AG04449 (cell line): ENCODE measurements at regions of chr6 and their contacts with region 1.

Region 1: DNA sequence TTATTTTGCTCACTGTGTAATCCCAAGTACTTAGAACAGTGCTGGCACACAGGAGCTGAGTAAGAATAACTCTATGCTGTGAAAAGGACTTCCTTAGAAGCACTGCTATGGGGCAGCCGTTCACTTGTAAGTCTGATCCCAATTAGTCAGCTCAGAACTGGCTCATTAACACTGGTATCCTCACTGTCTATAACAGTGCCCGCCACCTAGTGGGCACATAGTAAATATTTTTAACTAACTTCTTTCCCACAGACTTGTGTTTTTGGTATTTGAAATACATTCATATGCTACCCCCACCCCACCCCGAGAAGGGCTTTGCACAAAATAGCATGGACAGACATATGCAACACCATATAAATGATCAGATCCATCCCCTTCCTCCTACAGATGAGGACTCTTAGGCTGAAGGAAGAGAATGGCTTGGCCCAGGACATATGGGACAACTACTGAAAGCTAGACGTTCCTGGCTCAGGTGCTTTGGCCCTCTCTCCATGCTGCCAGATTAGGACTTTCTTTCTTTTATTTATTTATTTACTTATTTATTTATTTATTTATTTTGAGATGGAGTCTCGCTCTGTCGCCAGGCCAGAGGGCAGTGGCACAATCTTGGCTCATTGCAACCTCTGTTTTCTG is 47.1 kb downstream of the DST start:
- DNase-seq: no peak
- H3K4me3 ChIP-seq: no peak overlapping the region
- CTCF ChIP-seq: peak; percentile 32

Region 2: GRCh38 chr6:56259234-56260077 is 336.1 kb before region 1 on chr6:
- CTCF ChIA-PET with region 1: no interaction called
- POLR2A ChIA-PET with region 1: no interaction called
- DNase-seq: peak; percentile 34
- H3K4me3 ChIP-seq: no peak overlapping the region
- CTCF ChIP-seq: no peak

Region 3: DNA sequence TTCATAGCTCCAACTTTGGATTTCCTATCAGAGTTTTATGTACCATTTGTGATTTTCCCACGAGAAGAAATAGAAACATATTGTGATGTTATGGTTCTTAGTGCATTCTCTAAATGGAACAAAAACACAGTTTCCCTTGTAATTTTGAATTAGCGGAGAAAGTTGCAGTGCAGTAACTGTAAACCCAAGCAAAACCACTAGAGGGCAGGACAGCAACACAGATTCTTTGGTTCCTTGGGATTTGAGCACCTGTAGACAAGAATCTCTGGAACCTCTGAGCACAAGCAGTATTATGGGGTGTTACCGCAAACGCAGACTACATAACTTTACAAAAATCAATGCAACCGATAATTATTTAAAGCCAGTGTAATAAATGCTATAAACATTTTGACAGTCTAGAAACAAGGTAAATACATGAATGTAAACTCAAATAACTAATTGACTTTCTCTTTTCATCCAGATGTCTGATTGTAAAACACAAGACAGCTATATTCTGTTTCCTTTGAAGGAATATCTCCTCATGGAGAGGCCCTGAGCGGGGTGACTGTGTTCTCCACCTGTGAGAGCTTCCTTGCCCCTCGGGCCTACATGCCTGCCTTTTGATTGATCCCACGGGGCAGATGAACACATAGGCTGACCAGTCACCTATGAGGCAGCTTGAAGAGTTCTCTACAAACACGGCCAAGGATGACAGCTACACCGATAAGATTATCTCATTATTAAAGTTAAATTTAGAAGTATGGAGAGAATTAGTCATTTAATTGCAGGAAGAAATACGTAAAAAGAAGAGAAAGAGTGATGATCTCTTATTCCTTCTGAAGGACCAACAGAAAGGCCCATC is 280.7 kb before region 1 on chr6:
- CTCF ChIA-PET with region 1: interaction called, 53 read pairs
- POLR2A ChIA-PET with region 1: no interaction called
- DNase-seq: no peak
- H3K4me3 ChIP-seq: no peak overlapping the region
- CTCF ChIP-seq: peak; percentile 75

Region 4: GRCh38 chr6:56364827-56365313 is 230.7 kb before region 1 on chr6:
- CTCF ChIA-PET with region 1: interaction called, 50 read pairs
- POLR2A ChIA-PET with region 1: no interaction called
- DNase-seq: peak; percentile 64
- H3K4me3 ChIP-seq: no peak overlapping the region
- CTCF ChIP-seq: no peak

Region 5: GRCh38 chr6:56474531-56475050 is 121.0 kb before region 1 on chr6:
- CTCF ChIA-PET with region 1: interaction called, 16 read pairs
- POLR2A ChIA-PET with region 1: no interaction called
- DNase-seq: no peak
- H3K4me3 ChIP-seq: no peak overlapping the region
- CTCF ChIP-seq: no peak

Region 6: DNA sequence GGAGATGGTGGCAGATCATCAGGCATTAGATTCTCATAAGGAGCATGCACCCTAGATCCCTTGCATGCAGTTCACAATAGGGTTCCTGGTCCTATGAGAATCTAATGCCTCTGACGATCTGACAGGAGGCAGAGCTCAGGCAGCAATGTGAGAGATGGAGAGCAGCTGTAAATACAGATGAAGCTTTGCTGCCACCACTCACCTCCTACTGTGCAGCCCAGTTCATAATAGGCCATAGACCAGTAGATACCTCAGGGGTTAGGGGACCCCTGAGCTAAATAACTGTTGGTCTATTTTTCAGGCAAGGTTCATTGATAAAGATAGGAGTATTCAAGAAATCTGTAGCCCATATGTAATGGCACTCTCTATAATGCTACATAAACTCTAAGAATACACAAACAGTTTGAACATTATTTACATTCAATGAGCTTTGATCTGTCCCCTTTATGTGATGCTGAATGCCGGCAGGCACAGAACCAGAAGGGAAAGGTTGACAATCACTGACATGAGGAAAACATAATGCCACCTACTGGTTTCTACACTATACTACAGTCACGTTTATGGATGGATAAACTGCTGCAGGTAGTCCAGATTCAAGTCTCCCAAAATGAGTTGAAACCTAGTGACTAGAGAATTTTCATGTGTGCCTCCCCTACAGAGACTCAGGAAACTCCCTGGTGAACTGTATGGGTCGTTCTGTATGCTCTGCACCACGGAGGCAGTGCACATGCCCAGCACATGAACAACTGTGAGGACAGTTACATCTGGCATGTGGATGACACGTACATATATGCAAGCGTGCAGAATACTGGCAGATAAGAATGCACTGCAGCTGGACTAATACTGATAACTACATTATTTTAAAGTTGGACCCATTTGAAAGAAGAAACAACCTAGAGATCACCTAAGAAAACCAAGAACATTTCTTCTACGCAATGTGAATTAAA is 24.9 kb before region 1 on chr6:
- CTCF ChIA-PET with region 1: interaction called, 49 read pairs
- POLR2A ChIA-PET with region 1: no interaction called
- DNase-seq: no peak
- H3K4me3 ChIP-seq: no peak overlapping the region
- CTCF ChIP-seq: peak; percentile 49

Region 7: GRCh38 chr6:56581296-56581925 is 14.2 kb before region 1 on chr6:
- CTCF ChIA-PET with region 1: interaction called, 55 read pairs
- POLR2A ChIA-PET with region 1: no interaction called
- DNase-seq: no peak
- H3K4me3 ChIP-seq: no peak overlapping the region
- CTCF ChIP-seq: no peak